Colonic mucosa (tissue), 4 donors: ENCODE measurements at regions of chr1 and their contacts with region 1.

Region 1: GRCh38 chr1:77832901-77833300 is 53.5 kb downstream of the MIGA1 start:
- DNase-seq: no peak
- H3K4me3 ChIP-seq: no peak overlapping the region
- H3K27ac ChIP-seq: peak overlapping the region; percentile 35
- H3K4me1 ChIP-seq: peaks cover 9% of the 10 kb centered on the region
- H3K27me3 ChIP-seq: no peaks in the 10 kb centered on the region
- CTCF ChIP-seq: no peak

Region 2: GRCh38 chr1:77888081-77888780 is 55.3 kb after region 1 on chr1 and contains the start of gene NEXN:
- intact Hi-C with region 1: loop called (anchors 5 kb)
- DNase-seq: peak; percentile 38
- H3K4me3 ChIP-seq: peak within 1 kb of the TSS; percentile 47
- H3K27ac ChIP-seq: peak within 1 kb of the TSS; percentile 65
- H3K4me1 ChIP-seq: no peaks in the 10 kb centered on the region
- H3K27me3 ChIP-seq: no peaks in the 10 kb centered on the region
- CTCF ChIP-seq: no peak
- total RNA-seq, gene NEXN: 1.0 to 10.9 TPM

Region 3: DNA sequence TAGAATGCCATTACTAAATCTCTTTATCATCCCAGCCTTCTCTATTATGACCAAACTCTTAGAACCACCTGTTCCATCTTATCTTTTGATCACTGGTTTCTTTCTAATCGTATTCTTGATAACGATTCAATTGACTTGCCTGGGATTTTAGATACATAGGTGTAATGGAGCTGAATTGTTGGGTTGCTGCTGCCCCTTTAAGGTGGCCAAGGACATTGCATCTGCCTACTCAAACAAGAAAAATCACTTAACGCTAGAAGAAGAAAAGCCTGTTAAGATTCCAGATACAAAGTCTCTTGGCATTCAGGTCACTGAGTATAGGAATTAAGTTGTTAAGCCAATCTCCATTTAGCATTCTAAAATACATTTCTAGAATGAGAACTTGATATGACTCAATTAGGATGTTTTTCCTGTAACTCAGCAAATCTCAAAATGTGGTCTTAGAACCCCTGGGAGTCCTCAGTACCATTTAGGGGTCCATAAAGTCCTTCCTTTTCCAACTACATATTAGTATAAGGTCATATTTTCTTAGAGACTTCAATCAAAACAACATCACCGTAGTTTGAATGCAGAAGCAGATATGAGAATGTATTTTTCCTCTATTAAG is 67.9 kb after region 1 on chr1:
- intact Hi-C with region 1: loop called (anchors 5 kb)
- DNase-seq: peak; percentile 23
- H3K4me3 ChIP-seq: no peak overlapping the region
- H3K27ac ChIP-seq: no peak overlapping the region
- H3K4me1 ChIP-seq: no peaks in the 10 kb centered on the region
- H3K27me3 ChIP-seq: no peaks in the 10 kb centered on the region
- CTCF ChIP-seq: peak; percentile 45

Region 4: GRCh38 chr1:78250201-78250600 is 417.3 kb after region 1 on chr1:
- intact Hi-C with region 1: no loop called
- DNase-seq: no peak
- H3K4me3 ChIP-seq: no peak overlapping the region
- H3K27ac ChIP-seq: no peak overlapping the region
- H3K4me1 ChIP-seq: peaks cover under 1% of the 10 kb centered on the region
- H3K27me3 ChIP-seq: no peaks in the 10 kb centered on the region
- CTCF ChIP-seq: no peak